H1 (cell line): ENCODE measurements at regions of chr19 and their contacts with region 1.

Region 1: DNA sequence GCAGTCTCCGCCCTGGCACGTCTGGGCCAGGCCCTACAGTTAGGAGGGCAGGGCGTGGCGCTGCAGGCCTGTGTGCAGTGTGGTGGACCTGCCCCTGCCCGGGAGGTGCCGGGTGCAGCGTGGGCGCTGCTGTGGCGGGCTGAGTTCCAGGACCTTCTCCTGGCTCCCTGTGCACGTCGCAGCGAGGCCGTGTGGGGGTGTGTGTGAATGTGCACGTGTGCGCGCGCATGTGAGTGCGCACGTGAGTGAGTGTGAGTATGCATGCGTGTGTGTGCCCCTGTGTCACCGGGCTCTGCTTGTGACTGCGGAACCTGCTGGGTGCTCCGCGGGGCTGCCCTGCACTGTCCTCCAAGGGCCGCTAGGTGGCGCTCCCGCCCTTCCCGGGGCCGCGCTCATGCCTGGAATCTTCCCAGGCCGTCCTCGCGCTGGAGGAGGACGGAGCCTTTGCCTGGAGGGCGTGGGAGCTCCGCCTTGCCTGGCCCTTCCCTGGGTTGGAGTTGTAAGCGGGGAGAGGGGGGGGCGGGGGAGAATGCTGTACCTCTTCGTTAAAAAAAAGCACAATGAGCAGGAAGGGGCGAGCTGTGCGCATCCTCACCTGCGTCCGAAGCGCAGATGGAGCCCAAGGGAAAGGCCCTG is 79.3 kb downstream of the KDM4B start:
- DNase-seq: peak; percentile 65 to 97
- H3K4me3 ChIP-seq: no peak overlapping the region
- H3K27ac ChIP-seq: no peak overlapping the region
- H3K4me1 ChIP-seq: peaks cover 0 to 8% (median 2%) of the 10 kb centered on the region in 4 experiments; a peak in 5 of 7 replicates
- H3K27me3 ChIP-seq: no peaks in the 10 kb centered on the region
- CTCF ChIP-seq: peak; percentile 98 to 99 (median 99)
- EP300 ChIP-seq: no peak
- POLR2A ChIP-seq: no peak
- RAD21 ChIP-seq: peak; percentile 99

Region 2: GRCh38 chr19:5068233-5069072 is 20.2 kb after region 1 on chr19:
- CTCF ChIA-PET with region 1: interaction called, 22 read pairs
- POLR2A ChIA-PET with region 1: no interaction called
- DNase-seq: no peak
- H3K4me3 ChIP-seq: no peak overlapping the region
- H3K27ac ChIP-seq: no peak overlapping the region
- H3K4me1 ChIP-seq: peaks cover under 1 to 12% (median 4%) of the 10 kb centered on the region in 4 experiments; a peak in 5 of 7 replicates
- H3K27me3 ChIP-seq: no peaks in the 10 kb centered on the region
- CTCF ChIP-seq: no peak
- EP300 ChIP-seq: no peak
- POLR2A ChIP-seq: no peak
- RAD21 ChIP-seq: no peak

Region 3: GRCh38 chr19:5086725-5087439 is 38.7 kb after region 1 on chr19:
- CTCF ChIA-PET with region 1: interaction called, 39 read pairs
- POLR2A ChIA-PET with region 1: no interaction called
- DNase-seq: peak; percentile 76 to 79
- H3K4me3 ChIP-seq: no peak overlapping the region
- H3K27ac ChIP-seq: no peak overlapping the region
- H3K4me1 ChIP-seq: peaks cover 0 to 6% (median 4%) of the 10 kb centered on the region in 4 experiments; a peak in 4 of 7 replicates
- H3K27me3 ChIP-seq: no peaks in the 10 kb centered on the region
- CTCF ChIP-seq: peak; percentile 75 to 97 (median 89)
- EP300 ChIP-seq: no peak
- POLR2A ChIP-seq: no peak
- RAD21 ChIP-seq: peak; percentile 45 to 68

Region 4: DNA sequence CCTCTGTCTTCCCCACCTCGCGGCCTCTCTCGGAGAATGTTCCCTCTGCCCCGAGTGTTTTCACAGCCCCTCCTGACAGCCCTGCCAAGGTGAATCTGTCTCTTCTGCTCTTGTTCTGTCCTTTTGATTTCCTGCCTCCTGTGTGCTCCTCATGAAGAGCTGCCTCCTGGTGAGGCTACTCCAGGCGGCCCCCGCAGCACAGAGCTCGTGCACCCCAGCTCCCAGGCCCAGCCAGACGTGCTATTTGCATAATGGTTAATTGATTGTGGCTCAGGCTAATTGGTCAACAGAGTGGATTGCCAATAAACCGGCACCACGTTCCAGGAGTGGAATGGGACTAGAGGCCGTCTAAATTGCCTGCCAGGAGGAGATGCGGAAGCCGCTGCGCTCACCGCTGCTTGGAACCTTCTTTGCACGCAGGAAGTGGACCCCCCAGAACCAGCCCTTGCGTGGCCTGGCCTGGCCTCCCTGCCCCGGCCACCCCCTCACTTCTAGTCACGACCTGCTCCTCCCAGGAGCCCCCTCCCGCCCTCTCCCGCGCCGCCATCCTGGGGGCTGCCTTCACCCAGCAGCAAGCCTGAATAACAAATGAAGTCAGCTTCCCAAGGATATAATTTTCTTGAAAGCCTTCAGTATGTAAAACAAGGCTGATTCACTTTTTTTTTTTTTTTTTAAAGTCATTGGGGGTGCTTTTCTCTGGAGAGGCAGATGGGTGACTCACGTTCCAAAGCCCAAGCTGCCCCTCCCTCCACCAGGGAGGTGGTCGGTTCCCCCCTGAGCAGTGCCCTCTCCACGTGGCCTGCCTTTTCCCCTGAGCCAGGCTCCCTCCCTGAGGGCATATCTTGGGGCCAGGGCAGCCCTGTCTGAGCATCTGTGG is 64.7 kb after region 1 on chr19:
- CTCF ChIA-PET with region 1: interaction called, 73 read pairs
- POLR2A ChIA-PET with region 1: no interaction called
- DNase-seq: no peak
- H3K4me3 ChIP-seq: no peak overlapping the region
- H3K27ac ChIP-seq: no peak overlapping the region; the same call in 1 of the 2 replicates
- H3K4me1 ChIP-seq: peaks cover 0 to 40% (median 26%) of the 10 kb centered on the region in 4 experiments; a peak in 6 of 7 replicates
- H3K27me3 ChIP-seq: no peaks in the 10 kb centered on the region
- CTCF ChIP-seq: no peak
- EP300 ChIP-seq: no peak
- POLR2A ChIP-seq: no peak
- RAD21 ChIP-seq: no peak

Region 5: GRCh38 chr19:5138606-5139582 is 90.7 kb after region 1 on chr19:
- CTCF ChIA-PET with region 1: interaction called, 97 read pairs
- POLR2A ChIA-PET with region 1: interaction called, 6 read pairs
- DNase-seq: no peak
- H3K4me3 ChIP-seq: no peak overlapping the region
- H3K27ac ChIP-seq: no peak overlapping the region
- H3K4me1 ChIP-seq: peaks cover 0 to 5% (median 0%) of the 10 kb centered on the region in 4 experiments; a peak in 2 of 7 replicates
- H3K27me3 ChIP-seq: no peaks in the 10 kb centered on the region
- CTCF ChIP-seq: no peak
- EP300 ChIP-seq: no peak
- POLR2A ChIP-seq: no peak
- RAD21 ChIP-seq: no peak